K562 (cell line): ENCODE measurements at regions of chr2 and their contacts with region 1.

Region 1: DNA sequence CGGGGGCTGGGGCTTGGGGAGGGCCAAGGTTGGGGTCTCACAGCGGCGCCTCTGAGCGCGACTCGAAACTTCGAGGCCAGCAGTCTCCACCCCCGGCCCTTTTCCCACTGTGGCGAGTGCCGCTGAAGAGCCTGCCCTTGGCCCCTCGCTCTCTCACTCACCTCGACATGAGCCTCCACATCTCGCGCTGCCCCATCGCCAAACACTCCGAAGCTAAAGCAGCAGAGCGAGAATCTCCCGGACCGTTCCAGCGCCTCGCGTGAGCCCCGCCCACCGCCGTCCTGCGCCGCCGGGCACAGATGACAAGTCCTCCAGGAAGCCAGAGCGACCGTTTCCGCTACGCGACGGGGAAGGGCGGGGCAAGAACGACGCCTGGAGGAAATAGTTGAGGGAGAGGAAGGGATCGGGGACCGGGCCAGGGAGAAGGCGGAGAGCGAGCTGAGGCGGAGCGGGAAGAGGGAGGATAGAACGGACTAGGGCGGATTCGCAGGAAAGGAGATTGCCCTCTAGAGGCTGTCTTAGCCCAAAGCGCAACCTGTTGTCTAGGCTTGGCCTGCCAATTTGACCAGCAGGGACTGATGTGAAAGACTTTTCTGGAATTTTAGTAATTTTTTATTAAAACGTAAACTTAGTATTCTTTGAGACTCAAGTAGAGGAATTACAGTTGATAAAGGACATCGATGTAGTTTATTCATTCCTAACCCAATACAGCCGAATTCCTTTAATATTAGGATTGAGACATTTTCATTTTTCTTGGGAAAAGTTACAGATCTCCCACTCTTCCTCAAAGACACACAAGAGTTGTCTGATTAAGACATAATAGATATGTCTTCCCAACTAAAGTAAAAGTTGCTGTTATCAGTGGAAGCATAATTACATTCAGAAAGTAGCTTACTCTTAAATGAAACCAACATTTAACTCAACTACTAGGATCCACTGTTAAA is at the start of gene HIBCH:
- DNase-seq: peak; percentile 75 to 98 (median 82)
- ATAC-seq: peak; percentile 95
- H3K4me3 ChIP-seq: peak within 1 kb of the TSS; percentile 72
- H3K27ac ChIP-seq: peak within 1 kb of the TSS; percentile 52
- H3K4me1 ChIP-seq: peaks cover 0 to 12% of the 10 kb centered on the region in 2 experiments; a peak in 3 of 5 replicates
- H3K27me3 ChIP-seq: no peaks in the 10 kb centered on the region
- CTCF ChIP-seq: peak; percentile 83 to 85 (median 84)
- EP300 ChIP-seq: peak; percentile 16
- POLR2A ChIP-seq: peak; percentile 71
- RAD21 ChIP-seq: peak; percentile 9 to 31; a peak in 1 of 4 replicates
- polyA plus RNA-seq, gene HIBCH: 52.8 to 65.4 TPM

Region 2: DNA sequence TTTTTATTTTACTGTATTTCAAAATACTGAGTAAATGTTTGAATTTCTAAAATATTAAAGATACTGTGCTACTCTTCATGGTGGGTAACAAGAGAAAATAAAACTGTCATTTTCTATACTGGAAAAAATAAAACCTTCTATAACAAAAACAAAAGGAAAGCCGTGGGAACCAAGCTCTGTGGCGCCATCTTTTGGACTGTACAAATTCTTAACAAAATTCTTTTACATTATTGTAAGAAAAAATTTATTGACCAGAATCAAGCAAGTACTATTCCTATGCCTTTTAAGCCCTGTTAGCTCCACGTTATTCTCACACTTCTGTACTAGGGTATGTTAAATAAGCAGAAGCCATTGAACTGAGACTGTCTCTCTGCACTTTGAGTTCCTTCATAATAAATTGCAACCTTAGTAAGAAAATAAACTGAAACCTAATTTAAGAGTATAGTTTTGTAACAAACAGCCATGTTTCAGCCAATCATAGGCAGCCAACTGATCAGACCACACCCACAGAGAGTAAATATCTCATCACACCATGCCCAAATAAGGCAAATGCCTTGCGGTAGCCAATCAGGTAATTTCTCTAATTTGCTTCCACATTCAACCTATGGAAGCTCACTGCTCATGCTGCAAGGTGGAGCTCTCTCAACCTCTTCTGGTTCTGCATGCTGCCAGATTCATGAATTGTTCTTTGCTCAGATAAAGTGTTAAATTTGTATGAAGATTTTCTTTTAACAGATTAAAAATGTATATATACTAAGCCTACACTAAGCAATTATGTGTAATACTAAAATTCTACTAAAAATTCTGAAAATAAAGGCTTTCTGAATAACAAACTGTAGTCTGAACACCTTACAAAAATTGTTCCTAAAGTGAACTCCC is 42.4 kb before region 1 on chr2:
- CTCF ChIA-PET with region 1: no interaction called
- POLR2A ChIA-PET with region 1: no interaction called
- in situ Hi-C with region 1: no loop called
- intact Hi-C with region 1: loop called (anchors 5 kb)
- DNase-seq: peak; percentile 24 to 66 (median 43)
- ATAC-seq: peak; percentile 99
- H3K4me3 ChIP-seq: no peak overlapping the region
- H3K27ac ChIP-seq: peak overlapping the region; percentile 78
- H3K4me1 ChIP-seq: peaks cover 0 to 10% of the 10 kb centered on the region in 2 experiments; a peak in 2 of 5 replicates
- H3K27me3 ChIP-seq: no peaks in the 10 kb centered on the region
- CTCF ChIP-seq: peak; percentile 33 to 64 (median 38); a peak in 4 of 6 replicates
- EP300 ChIP-seq: no peak
- POLR2A ChIP-seq: no peak
- RAD21 ChIP-seq: peak; percentile 64 to 73